ENCODE measurements at regions of chr4 and their contacts with region 1.

Region 1: GRCh38 chr4:10116580-10117358 is at the start of gene WDR1:
- DNase-seq: peak; percentile 88 to 96 (median 95)
- H3K4me3 ChIP-seq: peak within 1 kb of the TSS; percentile 72 to 89 (median 80)
- H3K27ac ChIP-seq: peak within 1 kb of the TSS; percentile 90 to 96
- H3K4me1 ChIP-seq: peaks cover 6 to 66% (median 52%) of the 10 kb centered on the region in 4 experiments
- H3K27me3 ChIP-seq: no peaks in the 10 kb centered on the region

Region 2: GRCh38 chr4:10096201-10096977 is 20.4 kb before region 1 on chr4:
- CTCF ChIA-PET with region 1: interaction called, 43 read pairs
- POLR2A ChIA-PET with region 1: interaction called, 56 read pairs
- DNase-seq: peak; percentile 82 to 97 (median 96)
- H3K4me3 ChIP-seq: peak overlapping the region in 3 of 7 experiments; percentile 20 to 32 (median 25)
- H3K27ac ChIP-seq: peak overlapping the region in 1 of 2 experiments; percentile 20
- H3K4me1 ChIP-seq: peaks cover 10 to 99% (median 96%) of the 10 kb centered on the region in 4 experiments
- H3K27me3 ChIP-seq: no peaks in the 10 kb centered on the region

Region 3: DNA sequence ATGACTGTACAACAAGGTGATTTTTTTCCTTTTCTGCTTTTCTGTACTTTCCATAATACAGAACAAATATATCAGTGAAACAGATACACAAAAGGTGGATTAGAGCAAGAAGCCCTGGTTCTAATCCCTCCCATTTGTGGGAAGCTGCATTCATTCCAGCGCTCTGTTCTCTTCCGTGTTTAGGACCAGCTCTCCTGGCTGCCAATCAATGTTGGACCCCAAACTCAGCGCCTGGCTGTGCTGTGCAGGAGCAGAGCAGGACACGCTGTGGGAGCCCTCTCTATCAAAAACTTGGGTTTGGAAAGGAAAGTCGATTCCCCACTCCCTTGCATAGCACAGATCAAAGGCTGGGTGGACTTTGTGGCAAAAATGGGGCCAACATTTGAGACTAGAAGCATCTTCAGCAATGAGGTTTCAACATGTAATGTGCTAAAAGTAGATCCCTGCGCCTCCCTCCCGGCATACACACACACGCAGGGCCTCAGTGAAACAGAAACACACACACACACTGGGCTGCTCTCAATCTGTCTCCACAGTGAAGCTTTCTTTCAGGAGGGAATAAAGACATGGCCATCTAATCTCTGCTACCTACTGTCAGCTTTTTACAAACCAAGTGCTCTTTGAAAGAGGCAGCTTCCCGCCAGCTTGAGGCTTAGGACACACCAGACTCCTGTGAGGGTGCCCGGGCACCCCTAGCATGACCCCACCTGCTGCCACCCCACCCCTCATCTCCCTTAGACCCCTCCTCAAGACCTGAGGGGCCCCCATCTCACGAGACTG is 12.4 kb before region 1 on chr4:
- CTCF ChIA-PET with region 1: interaction called, 12 read pairs
- POLR2A ChIA-PET with region 1: interaction called, 8 read pairs
- DNase-seq: no peak
- H3K4me3 ChIP-seq: no peak overlapping the region
- H3K27ac ChIP-seq: peak overlapping the region; percentile 5 to 38
- H3K4me1 ChIP-seq: peaks cover 2 to 53% (median 43%) of the 10 kb centered on the region in 4 experiments
- H3K27me3 ChIP-seq: no peaks in the 10 kb centered on the region

Region 4: DNA sequence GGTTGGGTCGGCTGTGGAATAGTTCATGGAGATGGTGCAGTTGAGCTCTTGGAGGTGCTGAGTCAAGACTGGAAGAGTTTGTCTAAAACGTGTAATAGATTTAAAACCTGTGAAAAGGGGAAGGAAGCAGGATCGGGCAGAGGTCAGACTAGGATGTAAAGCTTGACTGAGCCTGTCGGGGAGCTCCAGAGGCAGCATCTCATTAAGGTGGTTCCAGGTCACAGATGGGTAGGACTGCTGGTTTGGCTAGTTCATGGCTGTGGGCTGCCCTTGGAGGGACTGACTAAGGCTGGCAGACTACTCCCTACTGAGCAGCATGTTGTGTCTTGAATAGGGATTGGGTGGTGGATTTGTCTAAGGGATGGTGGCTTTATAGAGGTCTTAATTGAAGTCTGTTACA is 28.2 kb after region 1 on chr4:
- CTCF ChIA-PET with region 1: interaction called, 11 read pairs
- POLR2A ChIA-PET with region 1: interaction called, 3 read pairs
- DNase-seq: peak in 2 of 3 donors; percentile 59
- H3K4me3 ChIP-seq: no peak overlapping the region
- H3K27ac ChIP-seq: no peak overlapping the region
- H3K4me1 ChIP-seq: peaks cover 0 to 7% (median 6%) of the 10 kb centered on the region in 4 experiments
- H3K27me3 ChIP-seq: no peaks in the 10 kb centered on the region

Region 5: DNA sequence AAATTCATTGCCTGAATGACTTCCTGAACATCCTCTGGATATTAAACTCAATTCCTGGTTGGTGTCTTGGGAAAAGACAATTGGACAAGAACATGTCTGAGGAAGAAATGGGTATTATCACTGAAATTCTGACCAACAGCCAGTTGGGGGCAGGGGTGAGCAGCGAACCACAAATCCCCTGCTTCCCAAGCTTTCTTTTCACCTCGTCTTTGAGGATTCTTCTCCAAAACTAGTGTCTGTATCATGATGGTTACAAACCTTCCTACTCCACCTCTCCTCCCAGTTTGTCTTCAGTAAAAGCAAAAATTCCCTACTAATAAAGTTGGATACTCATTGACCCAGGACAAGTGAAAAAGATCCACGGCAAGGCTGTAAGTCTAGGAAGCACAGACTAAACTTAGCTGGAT is 48.1 kb after region 1 on chr4:
- CTCF ChIA-PET with region 1: interaction called, 49 read pairs
- POLR2A ChIA-PET with region 1: interaction called, 3 read pairs
- DNase-seq: peak in 2 of 3 donors; percentile 35 to 43
- H3K4me3 ChIP-seq: no peak overlapping the region
- H3K27ac ChIP-seq: no peak overlapping the region
- H3K4me1 ChIP-seq: peaks cover 0 to 9% (median 5%) of the 10 kb centered on the region in 4 experiments
- H3K27me3 ChIP-seq: no peaks in the 10 kb centered on the region

Measured in common myeloid progenitor, CD34-positive (primary cell).